ENCODE measurements at regions of chr14 and their contacts with region 1.

Region 1: GRCh38 chr14:51776102-51776894 is 84.1 kb upstream of the GNG2 start:
- DNase-seq: peak in 2 of 3 donors; percentile 31 to 55
- ATAC-seq: peak; percentile 68 to 84 (median 74)
- H3K4me3 ChIP-seq: no peak overlapping the region
- H3K27ac ChIP-seq: no peak overlapping the region
- H3K4me1 ChIP-seq: no peaks in the 10 kb centered on the region
- H3K27me3 ChIP-seq: no peaks in the 10 kb centered on the region
- CTCF ChIP-seq: peak; percentile 44 to 59 (median 55)
- POLR2A ChIP-seq: no peak

Region 2: DNA sequence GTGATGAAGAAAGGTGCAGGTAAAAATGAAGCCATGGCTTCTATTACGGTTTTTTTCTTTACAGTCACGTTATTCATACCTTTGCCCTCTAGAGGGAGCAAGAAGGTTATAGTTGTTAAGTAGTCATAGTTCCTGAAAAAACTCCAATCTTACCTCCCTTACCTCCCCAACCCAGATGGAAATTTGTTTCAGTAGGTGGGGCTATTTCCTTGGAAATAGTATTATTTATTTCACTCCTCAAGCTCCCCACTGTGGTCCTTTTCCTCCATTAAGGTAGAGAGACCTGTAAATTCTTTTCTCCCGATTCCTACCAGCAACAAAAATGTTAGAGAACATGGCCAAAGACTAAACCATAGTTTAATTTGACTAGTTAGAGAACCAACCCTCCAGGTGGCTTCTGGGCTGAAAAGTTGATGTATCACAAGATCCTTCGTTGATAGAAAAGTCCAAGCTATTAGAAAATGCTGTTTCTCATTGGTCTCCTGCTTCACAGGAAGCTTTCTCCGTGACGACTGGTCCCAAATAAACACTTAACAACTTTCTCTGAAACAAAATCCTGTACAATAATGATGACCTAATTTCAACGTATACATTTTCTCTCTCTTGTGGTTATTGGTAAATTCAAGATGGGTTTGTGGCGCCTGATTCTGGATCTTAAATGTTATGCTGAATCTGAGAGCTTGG is 492.8 kb before region 1 on chr14:
- intact Hi-C with region 1: loop called (anchors 5 to 10 kb)
- DNase-seq: no peak
- ATAC-seq: peak; percentile 91 to 99 (median 93)
- H3K4me3 ChIP-seq: no peak overlapping the region
- H3K27ac ChIP-seq: no peak overlapping the region
- H3K4me1 ChIP-seq: no peaks in the 10 kb centered on the region
- H3K27me3 ChIP-seq: no peaks in the 10 kb centered on the region
- CTCF ChIP-seq: peak; percentile 75 to 91 (median 78)
- POLR2A ChIP-seq: no peak

Measured in right lobe of liver (tissue), 6 donors.